HepG2 (cell line): ENCODE measurements at regions of chr4 and their contacts with region 1.

Region 1: DNA sequence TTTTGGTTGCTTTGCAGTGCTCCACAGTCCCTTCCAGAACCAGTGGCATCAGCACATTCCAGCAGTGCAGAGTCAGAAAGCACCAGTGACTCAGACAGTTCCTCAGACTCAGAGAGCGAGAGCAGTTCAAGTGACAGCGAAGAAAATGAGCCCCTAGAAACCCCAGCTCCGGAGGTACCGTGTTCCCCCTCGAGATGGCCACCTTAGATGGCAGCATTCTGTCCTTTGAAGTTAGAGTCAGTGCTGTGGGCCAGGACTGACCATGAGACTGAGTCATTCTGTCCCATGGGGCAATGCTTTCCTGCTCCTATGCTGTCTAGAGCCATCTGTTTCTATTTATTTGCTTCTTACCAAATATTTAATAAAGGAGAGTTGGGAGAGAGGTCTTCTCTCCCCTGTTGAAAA is 112.3 kb downstream of the KLHL8 start:
- DNase-seq: no peak
- ATAC-seq: no peak
- H3K4me3 ChIP-seq: no peak overlapping the region
- H3K27ac ChIP-seq: no peak overlapping the region
- H3K4me1 ChIP-seq: peaks cover 37% of the 10 kb centered on the region
- H3K27me3 ChIP-seq: no peaks in the 10 kb centered on the region
- CTCF ChIP-seq: no peak
- EP300 ChIP-seq: no peak
- POLR2A ChIP-seq: no peak
- RAD21 ChIP-seq: no peak

Region 2: DNA sequence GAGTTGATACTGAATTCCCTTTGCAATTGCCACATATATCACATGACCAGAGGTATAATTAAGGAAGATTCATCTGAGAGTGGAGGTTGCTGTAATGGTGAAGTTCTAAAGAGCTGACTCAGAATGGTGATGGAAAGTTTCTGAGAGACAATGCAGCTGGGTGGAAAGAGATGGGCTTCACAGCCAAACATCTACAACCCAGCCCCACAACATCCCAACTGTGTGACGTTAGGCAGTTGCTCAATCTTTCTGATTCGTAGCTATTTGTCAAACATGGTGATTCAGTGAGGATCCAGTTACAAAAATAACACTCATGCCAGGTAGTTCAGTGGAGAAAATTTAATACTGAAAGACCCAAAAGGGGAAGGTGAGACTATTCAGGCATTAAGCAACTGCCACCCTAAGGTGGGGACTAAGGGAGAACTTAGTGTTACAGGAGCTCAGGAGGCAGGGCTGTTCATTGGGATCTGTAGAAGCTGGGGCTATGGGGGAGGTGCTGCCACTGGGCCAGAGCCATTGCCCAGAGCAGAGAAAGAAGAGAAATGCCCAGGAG is 180.2 kb before region 1 on chr4:
- CTCF ChIA-PET with region 1: no interaction called
- POLR2A ChIA-PET with region 1: interaction called, 3 read pairs
- in situ Hi-C with region 1: no loop called
- intact Hi-C with region 1: loop called (anchors 5 kb)
- DNase-seq: peak; percentile 87
- ATAC-seq: peak; percentile 74
- H3K4me3 ChIP-seq: no peak overlapping the region
- H3K27ac ChIP-seq: no peak overlapping the region
- H3K4me1 ChIP-seq: peaks cover 21% of the 10 kb centered on the region
- H3K27me3 ChIP-seq: no peaks in the 10 kb centered on the region
- CTCF ChIP-seq: no peak
- EP300 ChIP-seq: peak in 1 of 2 experiments; percentile 60; a peak in 1 of 4 replicates
- POLR2A ChIP-seq: no peak
- RAD21 ChIP-seq: no peak